ENCODE measurements at regions of chr15 and their contacts with region 1.

Region 1: DNA sequence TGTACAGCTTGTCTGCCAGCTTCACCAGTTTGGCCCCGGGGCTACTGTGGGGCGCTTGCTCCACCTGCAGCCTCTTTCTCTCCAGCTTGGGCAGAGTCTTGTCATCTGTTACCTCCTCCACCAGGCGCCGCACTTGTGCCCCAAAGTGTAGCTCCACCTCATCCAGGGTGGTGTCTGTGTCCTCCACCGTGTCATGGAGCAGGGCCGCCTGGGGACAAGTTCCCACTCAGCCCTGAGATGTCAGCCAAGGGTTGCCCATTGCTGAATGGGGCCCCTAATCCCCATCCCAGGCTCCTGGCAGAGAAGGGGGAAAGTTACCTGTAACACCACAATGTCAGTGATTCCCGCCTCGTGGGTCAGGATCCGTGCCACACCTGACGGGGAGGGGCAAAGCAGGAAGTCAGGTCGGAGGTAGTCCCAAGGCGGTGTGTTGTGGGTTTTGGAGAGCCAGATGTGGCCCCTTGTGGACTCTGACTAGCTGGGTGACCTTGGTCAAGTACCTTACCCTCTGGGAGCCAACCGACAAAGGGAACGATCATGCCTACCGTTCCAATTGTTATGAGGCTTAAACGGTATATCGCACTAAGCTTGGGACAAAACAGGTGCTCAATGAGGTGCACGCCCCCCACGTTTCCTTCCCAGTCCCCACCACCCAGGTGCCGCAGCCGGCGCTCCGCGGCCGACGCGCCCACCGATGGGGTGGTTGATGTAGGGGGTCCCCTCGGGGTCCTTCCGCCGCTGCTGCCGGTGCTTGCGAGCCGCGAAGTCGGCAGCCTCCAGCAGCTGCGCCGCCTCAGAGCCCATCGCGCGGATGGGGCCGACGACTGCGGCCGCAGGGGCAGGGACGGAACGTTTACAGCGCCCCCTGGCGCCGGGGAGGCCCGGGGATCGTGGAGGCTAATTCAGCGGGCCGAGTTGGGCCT is at the start of gene HDDC3:
- DNase-seq: peak; percentile 98
- H3K4me3 Mint-ChIP-seq: peak within 1 kb of the TSS; percentile 92
- H3K27ac Mint-ChIP-seq: peak within 1 kb of the TSS; percentile 96
- H3K4me1 Mint-ChIP-seq: peaks cover 56% of the 10 kb centered on the region
- H3K27me3 Mint-ChIP-seq: no peaks in the 10 kb centered on the region
- CTCF ChIP-seq: peak; percentile 91
- total RNA-seq, gene HDDC3: 25.1 and 26.7 TPM in 2 replicates

Region 2: DNA sequence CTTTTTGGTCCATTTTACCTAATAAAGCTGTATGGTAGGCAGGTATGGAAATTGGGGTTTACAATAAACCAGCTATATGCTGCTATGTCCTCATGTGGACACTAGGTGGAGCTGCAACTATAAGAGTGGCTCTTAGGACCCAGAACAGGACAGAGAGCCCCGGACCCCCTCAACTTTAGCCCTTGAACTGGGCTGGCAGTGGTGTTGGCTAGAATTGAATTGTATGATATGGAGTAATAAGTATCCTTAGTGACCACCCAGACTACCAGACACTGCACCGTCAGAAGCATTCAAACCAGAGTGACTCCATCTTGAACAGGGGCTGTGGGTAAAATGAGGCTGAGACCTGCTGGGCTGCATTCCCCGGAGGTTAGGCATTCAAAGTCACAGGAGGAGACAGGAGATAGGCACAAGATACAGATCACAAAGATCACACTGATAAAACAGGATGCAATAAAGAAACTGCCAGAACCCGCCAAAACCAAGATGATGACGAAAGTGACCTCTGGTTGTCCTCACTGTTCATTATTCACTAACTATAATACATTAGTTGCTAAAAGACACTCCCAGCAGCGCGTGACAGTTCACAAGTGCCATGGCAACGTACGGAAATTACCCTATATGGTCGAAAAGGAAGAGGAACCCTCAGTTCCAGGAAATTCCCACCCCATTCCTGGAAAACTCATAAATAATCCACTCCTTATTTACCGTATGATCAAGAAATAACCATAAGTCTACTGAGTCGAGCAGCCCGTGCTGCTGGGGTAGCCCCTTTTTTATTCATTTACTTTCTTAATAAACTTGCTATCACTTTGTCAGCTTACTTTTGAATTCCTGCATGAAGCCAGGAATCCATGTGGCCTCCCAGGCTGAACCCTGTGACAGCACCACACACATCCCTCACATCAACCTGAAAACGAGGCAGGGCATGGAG is 283.6 kb before region 1 on chr15:
- CTCF ChIA-PET with region 1: interaction called, 8 read pairs
- intact Hi-C with region 1: loop called (anchors 2 kb)
- DNase-seq: peak; percentile 61
- H3K4me3 Mint-ChIP-seq: peak overlapping the region; percentile 42
- H3K27ac Mint-ChIP-seq: peak overlapping the region; percentile 82
- H3K4me1 Mint-ChIP-seq: peaks cover 9% of the 10 kb centered on the region
- H3K27me3 Mint-ChIP-seq: no peaks in the 10 kb centered on the region
- CTCF ChIP-seq: peak; percentile 90

Region 3: GRCh38 chr15:90954712-90955671 is 23.0 kb after region 1 on chr15 and contains the start of gene RCCD1:
- CTCF ChIA-PET with region 1: interaction called, 11 read pairs
- intact Hi-C with region 1: no loop called
- DNase-seq: peak; percentile 97
- H3K4me3 Mint-ChIP-seq: peak within 1 kb of the TSS; percentile 92
- H3K27ac Mint-ChIP-seq: peak within 1 kb of the TSS; percentile 78
- H3K4me1 Mint-ChIP-seq: no peaks in the 10 kb centered on the region
- H3K27me3 Mint-ChIP-seq: no peaks in the 10 kb centered on the region
- CTCF ChIP-seq: no peak
- total RNA-seq, gene RCCD1: 39.3 and 42.6 TPM in 2 replicates

Region 4: GRCh38 chr15:91049378-91050127 is 117.6 kb after region 1 on chr15:
- CTCF ChIA-PET with region 1: interaction called, 16 read pairs
- intact Hi-C with region 1: no loop called
- DNase-seq: peak; percentile 73
- H3K4me3 Mint-ChIP-seq: no peak overlapping the region
- H3K27ac Mint-ChIP-seq: no peak overlapping the region
- H3K4me1 Mint-ChIP-seq: no peaks in the 10 kb centered on the region
- H3K27me3 Mint-ChIP-seq: peaks cover 85% of the 10 kb centered on the region
- CTCF ChIP-seq: peak; percentile 63

Measured in Calu3 (cell line).